Activated CD8-positive, alpha-beta T cell treated with anti-CD3 and anti-CD28 coated beads, Interleukin-2, amount 10 ng/mL, durations not matched to agents 7 days and 5 days (primary cell): ENCODE measurements at regions of chr2 and their contacts with region 1.

Region 1: DNA sequence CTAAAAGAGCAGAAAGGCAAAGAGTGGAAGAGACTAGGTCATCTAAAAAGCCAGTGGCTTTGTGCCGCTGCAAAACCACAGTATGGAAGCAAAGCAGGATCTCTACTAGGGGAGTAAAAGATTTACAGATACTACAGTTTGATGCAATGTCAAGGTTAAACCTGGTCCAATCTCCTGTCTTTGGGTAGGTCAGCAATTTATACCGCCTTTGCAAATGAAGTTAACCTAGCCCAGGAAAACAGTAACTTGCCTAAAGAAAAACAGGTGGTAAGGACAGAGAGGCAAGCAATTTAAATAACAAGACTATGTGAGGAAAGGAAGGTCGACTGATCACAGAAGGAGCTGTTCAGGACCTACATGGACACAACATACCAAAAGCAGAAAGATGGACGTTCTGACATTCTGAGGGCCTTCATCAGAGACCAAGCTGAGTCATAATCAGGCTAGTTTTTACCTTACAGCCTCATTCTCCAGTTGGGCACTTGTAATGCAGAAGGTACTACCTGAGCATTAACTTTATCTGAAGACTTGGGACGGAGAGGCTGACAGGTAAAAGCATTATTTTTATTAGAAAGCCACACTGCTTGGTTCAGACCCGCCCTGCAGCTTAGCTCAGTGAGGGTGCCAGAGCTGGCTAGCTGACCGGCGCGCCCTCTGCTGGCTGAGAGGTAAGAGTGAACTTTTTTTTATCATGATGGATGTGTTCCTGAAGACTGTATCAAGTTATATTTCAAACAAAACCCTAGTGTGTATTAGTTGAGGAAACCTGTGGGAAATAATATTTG is 15.9 kb downstream of the CDKL4 start:
- DNase-seq: peak; percentile 92
- ATAC-seq: peak; percentile 82
- H3K4me3 Mint-ChIP-seq: peak overlapping the region; percentile 61
- H3K27ac Mint-ChIP-seq: peak overlapping the region; percentile 97
- H3K4me1 Mint-ChIP-seq: peaks cover 57% of the 10 kb centered on the region
- H3K27me3 Mint-ChIP-seq: no peaks in the 10 kb centered on the region

Region 2: GRCh38 chr2:38797276-38797675 is 430.5 kb before region 1 on chr2:
- CTCF ChIA-PET with region 1: no interaction called
- POLR2A ChIA-PET with region 1: no interaction called
- DNase-seq: no peak
- ATAC-seq: no peak
- H3K4me3 Mint-ChIP-seq: no peak overlapping the region
- H3K27ac Mint-ChIP-seq: no peak overlapping the region
- H3K4me1 Mint-ChIP-seq: no peaks in the 10 kb centered on the region
- H3K27me3 Mint-ChIP-seq: no peaks in the 10 kb centered on the region

Region 3: DNA sequence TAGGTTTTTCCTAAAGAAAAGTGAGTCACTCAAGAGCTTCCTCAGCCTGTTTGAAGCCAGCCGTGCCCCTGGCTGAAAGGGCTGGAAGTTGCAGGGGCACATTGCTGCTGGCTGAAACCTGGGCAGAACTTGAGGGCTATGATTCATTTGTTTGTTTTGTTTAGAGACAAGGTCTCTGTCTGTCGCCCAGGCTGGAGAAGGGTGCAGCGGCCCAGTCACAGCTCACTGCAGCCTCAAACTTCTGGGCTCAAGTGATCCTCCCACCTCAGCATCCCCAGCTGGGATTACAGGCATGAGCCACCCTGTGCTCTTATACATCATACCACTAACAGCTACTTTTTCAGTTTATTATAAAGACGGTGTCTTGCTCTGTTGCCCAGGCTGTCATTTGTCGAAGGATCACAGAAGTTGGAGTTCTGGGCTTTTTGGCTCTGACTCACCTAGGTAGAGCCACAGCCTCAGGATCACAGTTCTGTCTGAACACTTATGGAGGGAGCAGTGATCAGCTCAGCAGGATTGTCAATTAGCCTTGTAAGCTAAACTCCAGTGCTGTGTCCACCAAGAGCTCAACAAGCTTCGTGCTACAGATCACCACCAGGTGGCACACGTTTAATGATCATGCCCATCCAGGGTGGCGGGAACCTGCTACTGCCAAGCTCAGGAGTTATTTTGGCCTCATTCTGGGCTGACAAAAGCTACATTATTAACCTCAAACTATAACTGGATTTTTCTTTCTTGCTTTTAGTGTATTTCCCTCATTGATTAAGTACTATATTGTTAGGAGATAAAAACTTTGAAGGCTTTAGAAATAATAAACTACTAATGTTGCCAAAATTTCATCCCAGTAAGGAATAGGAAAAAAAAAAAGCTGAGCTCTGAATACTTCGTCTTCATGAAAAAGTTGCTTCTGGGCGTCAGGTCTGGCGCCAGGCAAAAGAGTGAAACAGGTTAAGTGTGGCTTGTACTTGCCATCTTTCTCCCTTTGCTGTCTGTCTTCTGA is 280.3 kb before region 1 on chr2:
- CTCF ChIA-PET with region 1: interaction called, 207 read pairs
- POLR2A ChIA-PET with region 1: interaction called, 9 read pairs
- DNase-seq: peak; percentile 84
- ATAC-seq: peak; percentile 93
- H3K4me3 Mint-ChIP-seq: no peak overlapping the region
- H3K27ac Mint-ChIP-seq: no peak overlapping the region
- H3K4me1 Mint-ChIP-seq: no peaks in the 10 kb centered on the region
- H3K27me3 Mint-ChIP-seq: peaks cover 3% of the 10 kb centered on the region

Region 4: GRCh38 chr2:39059366-39059952 is 168.4 kb before region 1 on chr2:
- CTCF ChIA-PET with region 1: interaction called, 282 read pairs
- POLR2A ChIA-PET with region 1: no interaction called
- DNase-seq: no peak
- ATAC-seq: no peak
- H3K4me3 Mint-ChIP-seq: no peak overlapping the region
- H3K27ac Mint-ChIP-seq: peak overlapping the region; percentile 72
- H3K4me1 Mint-ChIP-seq: peaks cover 31% of the 10 kb centered on the region
- H3K27me3 Mint-ChIP-seq: no peaks in the 10 kb centered on the region

Region 5: DNA sequence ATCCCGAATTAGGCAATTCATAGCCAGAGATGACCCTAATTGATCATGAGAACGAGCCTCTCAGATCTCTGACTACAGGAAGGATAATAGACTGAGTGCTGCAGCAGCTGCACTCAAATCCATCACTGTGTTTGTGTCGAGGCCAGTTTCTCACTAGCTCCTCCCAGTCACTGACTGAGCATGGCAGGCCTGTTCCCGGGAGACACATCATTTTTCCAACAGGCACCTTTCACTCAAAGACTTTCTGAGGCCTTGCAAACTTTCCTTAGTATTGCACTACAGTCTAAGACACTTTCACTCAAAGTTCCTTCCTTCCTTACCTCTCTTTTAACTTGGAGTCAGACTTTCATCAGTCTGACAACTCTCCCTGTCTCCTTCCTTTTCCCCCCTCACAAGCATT is 120.7 kb before region 1 on chr2:
- CTCF ChIA-PET with region 1: interaction called, 46 read pairs
- POLR2A ChIA-PET with region 1: interaction called, 6 read pairs
- DNase-seq: no peak
- ATAC-seq: no peak
- H3K4me3 Mint-ChIP-seq: no peak overlapping the region
- H3K27ac Mint-ChIP-seq: peak overlapping the region; percentile 45
- H3K4me1 Mint-ChIP-seq: peaks cover 68% of the 10 kb centered on the region
- H3K27me3 Mint-ChIP-seq: no peaks in the 10 kb centered on the region

Region 6: DNA sequence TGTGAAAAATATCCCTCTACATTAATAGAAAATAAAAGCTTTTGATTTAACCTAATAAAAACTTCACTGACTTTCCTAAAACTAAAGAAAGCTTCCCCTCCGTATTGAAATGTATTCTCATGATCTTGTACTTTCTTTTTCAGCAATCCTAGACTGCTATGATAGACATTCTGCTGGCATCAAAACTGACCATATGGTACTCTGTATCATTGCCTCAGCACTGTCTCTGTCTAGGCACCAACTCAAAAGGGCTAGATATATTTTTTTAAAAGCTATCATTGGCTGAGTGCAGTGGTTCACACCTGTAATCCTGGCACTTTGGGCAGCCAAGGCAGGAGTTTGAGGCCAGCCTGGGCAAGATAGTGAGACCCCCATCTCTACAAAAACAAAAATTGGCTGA is 17.0 kb before region 1 on chr2:
- CTCF ChIA-PET with region 1: interaction called, 12 read pairs
- POLR2A ChIA-PET with region 1: interaction called, 4 read pairs
- DNase-seq: no peak
- ATAC-seq: no peak
- H3K4me3 Mint-ChIP-seq: no peak overlapping the region
- H3K27ac Mint-ChIP-seq: peak overlapping the region; percentile 27
- H3K4me1 Mint-ChIP-seq: peaks cover 57% of the 10 kb centered on the region
- H3K27me3 Mint-ChIP-seq: no peaks in the 10 kb centered on the region

Region 7: GRCh38 chr2:39403311-39403710 is 175.5 kb after region 1 on chr2:
- CTCF ChIA-PET with region 1: no interaction called
- POLR2A ChIA-PET with region 1: no interaction called
- DNase-seq: no peak
- ATAC-seq: peak; percentile 27
- H3K4me3 Mint-ChIP-seq: no peak overlapping the region
- H3K27ac Mint-ChIP-seq: no peak overlapping the region
- H3K4me1 Mint-ChIP-seq: peaks cover 26% of the 10 kb centered on the region
- H3K27me3 Mint-ChIP-seq: no peaks in the 10 kb centered on the region

Region 8: DNA sequence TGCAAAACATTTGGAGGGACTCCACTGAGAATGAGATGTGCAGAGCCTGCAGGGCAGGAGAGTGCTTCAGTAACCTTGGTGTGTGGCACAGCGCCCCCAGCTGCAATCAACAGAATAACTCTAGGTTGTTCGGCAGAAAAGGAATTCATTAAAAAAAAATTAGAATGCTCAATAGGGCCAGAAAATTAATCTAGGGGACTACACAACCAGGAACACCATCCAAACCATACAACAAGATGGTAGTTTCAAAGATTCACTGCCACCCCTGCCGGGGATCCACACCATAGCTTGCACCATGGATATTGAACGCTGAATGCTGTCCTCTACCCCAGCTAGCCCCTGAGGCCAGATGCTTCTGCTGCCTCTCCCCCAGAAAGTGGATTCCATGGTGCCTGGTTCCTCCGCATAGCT is 501.1 kb after region 1 on chr2:
- CTCF ChIA-PET with region 1: interaction called, 11 read pairs
- POLR2A ChIA-PET with region 1: no interaction called
- DNase-seq: peak; percentile 43
- ATAC-seq: no peak
- H3K4me3 Mint-ChIP-seq: no peak overlapping the region
- H3K27ac Mint-ChIP-seq: no peak overlapping the region
- H3K4me1 Mint-ChIP-seq: peaks cover 7% of the 10 kb centered on the region
- H3K27me3 Mint-ChIP-seq: no peaks in the 10 kb centered on the region